Activated T-helper 1 cell treated with anti-CD3 and anti-CD28 coated beads, Interleukin-12 subunit alpha, Interleukin-12 subunit beta, Interleukin-2, Interleukin-4 antibody, amounts not matched to agents 30 ng/mL and 10 ng/mL and 1 ng/mL, durations not matched to agents 14 hours and 24 hours and 36 hours (primary cell): ENCODE measurements at regions of chr3 and their contacts with region 1.

Region 1: DNA sequence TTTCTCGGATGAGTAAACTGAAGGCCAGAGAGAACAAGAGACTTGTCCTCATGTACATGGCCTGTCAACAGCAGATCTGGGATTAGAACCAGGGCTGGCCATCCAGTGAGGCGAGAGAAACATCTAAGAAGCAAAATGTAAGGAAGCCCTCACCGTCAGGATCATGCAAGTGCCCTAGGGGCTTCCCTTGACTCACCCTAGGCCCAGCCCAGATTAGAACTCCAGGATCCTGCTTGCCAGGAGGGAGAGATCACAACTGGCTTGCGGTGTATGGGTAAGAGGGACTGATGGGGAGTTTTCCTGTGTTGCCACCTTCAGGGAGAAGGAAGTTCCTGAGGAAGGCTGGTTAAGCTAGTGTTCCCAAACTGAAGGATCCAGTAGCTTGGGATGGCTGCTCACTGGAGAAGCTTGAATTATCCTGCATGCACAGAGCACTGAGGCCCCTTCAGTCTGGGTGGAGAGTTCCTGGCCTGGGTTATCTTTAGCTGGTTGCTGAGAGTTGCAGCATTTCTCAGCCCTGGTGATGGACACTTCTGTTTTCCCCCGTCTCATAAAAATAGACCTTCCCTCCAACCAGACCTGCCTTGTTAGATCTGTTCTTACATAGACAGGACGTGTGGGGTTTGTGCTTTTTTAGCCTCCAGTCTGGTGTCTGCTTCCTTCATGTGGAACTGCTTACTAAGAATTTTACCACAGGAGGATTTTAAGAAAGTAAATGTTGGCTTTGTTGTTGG is 28.2 kb upstream of the XIRP1 start:
- DNase-seq: peak; percentile 16
- H3K4me3 Mint-ChIP-seq: peak overlapping the region; percentile 43
- H3K27ac Mint-ChIP-seq: peak overlapping the region; percentile 25
- H3K4me1 Mint-ChIP-seq: peaks cover 61% of the 10 kb centered on the region
- H3K27me3 Mint-ChIP-seq: peaks cover 52% of the 10 kb centered on the region

Region 2: DNA sequence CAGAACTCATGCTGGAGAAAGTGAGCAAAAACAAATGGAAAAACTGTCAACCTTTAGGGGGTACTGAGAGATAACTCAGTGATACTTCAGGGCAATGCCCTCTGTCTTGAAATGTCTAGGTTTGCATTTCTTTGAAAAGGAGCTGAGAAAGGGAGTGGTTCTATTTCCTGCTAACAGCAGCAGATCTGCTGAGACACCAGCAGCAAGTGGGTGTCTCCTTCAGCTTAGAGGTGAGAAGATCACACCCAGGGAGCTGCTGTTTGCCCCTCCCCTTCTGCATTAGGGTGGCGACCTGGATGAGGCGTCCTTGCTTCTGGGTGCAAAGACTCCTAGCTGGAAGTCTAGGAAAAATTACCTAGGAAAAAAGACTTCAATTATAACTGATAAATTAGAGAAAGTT is 14.1 kb after region 1 on chr3:
- intact Hi-C with region 1: loop called (anchors 1 kb)
- DNase-seq: peak; percentile 35
- H3K4me3 Mint-ChIP-seq: peak overlapping the region; percentile 38
- H3K27ac Mint-ChIP-seq: no peak overlapping the region
- H3K4me1 Mint-ChIP-seq: peaks cover 38% of the 10 kb centered on the region
- H3K27me3 Mint-ChIP-seq: peaks cover 35% of the 10 kb centered on the region